ENCODE measurements at regions of chr9 and their contacts with region 1.

Region 1: GRCh38 chr9:111386386-111386785 is 56.4 kb upstream of the OR2K2 start:
- DNase-seq: no peak
- ATAC-seq: no peak
- H3K4me3 ChIP-seq: no peak overlapping the region
- H3K27ac ChIP-seq: no peak overlapping the region
- H3K4me1 ChIP-seq: no peaks in the 10 kb centered on the region
- H3K27me3 ChIP-seq: no peaks in the 10 kb centered on the region
- CTCF ChIP-seq: no peak
- POLR2A ChIP-seq: no peak
- RAD21 ChIP-seq: no peak

Region 2: GRCh38 chr9:111356481-111357244 is 29.7 kb before region 1 on chr9:
- CTCF ChIA-PET with region 1: interaction called, 3 read pairs
- POLR2A ChIA-PET with region 1: interaction called, 13 read pairs
- dilution Hi-C with region 1: no loop called
- in situ Hi-C with region 1: no loop called
- intact Hi-C with region 1: no loop called
- DNase-seq: peak; percentile 94
- ATAC-seq: peak; percentile 89
- H3K4me3 ChIP-seq: peak overlapping the region; percentile 44
- H3K27ac ChIP-seq: peak overlapping the region; percentile 88
- H3K4me1 ChIP-seq: peaks cover 4% of the 10 kb centered on the region; the same call in 1 of the 2 replicates
- H3K27me3 ChIP-seq: no peaks in the 10 kb centered on the region
- CTCF ChIP-seq: no peak; the same call in 1 of the 2 replicates
- POLR2A ChIP-seq: no peak
- RAD21 ChIP-seq: no peak

Region 3: GRCh38 chr9:111369873-111370272 is 16.5 kb before region 1 on chr9:
- CTCF ChIA-PET with region 1: no interaction called
- POLR2A ChIA-PET with region 1: no interaction called
- dilution Hi-C with region 1: no loop called
- in situ Hi-C with region 1: no loop called
- intact Hi-C with region 1: no loop called
- DNase-seq: no peak
- ATAC-seq: no peak
- H3K4me3 ChIP-seq: no peak overlapping the region
- H3K27ac ChIP-seq: no peak overlapping the region
- H3K4me1 ChIP-seq: no peaks in the 10 kb centered on the region
- H3K27me3 ChIP-seq: no peaks in the 10 kb centered on the region
- CTCF ChIP-seq: no peak
- POLR2A ChIP-seq: no peak
- RAD21 ChIP-seq: no peak

Region 4: GRCh38 chr9:111427186-111427585 is 40.8 kb after region 1 on chr9:
- CTCF ChIA-PET with region 1: no interaction called
- POLR2A ChIA-PET with region 1: no interaction called
- dilution Hi-C with region 1: no loop called
- in situ Hi-C with region 1: no loop called
- intact Hi-C with region 1: loop called (anchors 5 kb)
- DNase-seq: peak; percentile 67
- ATAC-seq: no peak
- H3K4me3 ChIP-seq: no peak overlapping the region
- H3K27ac ChIP-seq: no peak overlapping the region
- H3K4me1 ChIP-seq: no peaks in the 10 kb centered on the region; the same call in 1 of the 2 replicates
- H3K27me3 ChIP-seq: no peaks in the 10 kb centered on the region
- CTCF ChIP-seq: no peak
- POLR2A ChIP-seq: no peak
- RAD21 ChIP-seq: no peak

Region 5: DNA sequence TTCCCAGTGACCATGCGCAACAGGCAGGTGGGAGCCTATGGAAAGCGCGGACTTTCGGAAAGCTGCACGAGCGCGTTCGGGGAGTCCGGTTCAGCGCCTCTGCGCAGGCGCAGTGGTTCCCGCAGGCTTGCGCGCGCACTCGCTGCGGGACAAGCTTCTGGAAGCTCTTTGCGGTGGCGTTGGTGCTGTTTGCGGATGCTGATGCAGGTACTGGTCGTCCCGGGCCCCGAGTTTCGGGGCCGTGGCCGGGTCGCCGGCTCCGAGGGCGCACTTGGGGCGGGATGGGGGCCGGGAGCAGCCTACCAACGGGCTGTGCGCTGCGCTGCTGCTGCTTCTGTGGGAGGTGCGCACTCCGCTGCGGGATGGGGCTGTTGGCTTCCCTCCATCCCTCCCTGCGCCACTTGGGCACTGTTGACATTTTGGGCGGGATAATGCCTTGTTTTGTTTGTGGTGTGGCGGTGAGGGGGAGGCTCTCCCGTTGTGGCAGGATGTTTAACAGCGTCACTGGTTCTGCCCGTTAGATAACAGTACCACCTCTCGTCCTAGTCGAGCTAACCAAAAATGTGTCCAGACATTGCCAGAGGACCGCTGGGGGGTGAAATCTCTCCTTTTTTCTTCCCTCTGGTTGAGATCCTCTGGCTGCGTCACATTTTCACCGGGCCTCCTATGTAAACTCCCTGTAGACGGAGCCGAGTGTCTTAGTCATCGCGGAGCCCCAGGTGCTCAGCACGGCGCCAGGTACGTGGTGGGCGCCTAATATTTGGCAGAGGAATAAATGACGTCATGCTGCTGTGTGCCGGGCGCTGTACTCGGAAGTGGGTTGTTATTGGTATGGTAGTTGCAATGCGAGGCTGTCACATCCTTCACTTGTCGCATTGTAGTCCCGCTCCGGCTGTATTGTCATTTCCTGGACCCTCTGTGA is 138.9 kb after region 1 on chr9 and contains the start of gene ZNF483:
- CTCF ChIA-PET with region 1: no interaction called
- POLR2A ChIA-PET with region 1: no interaction called
- dilution Hi-C with region 1: no loop called
- in situ Hi-C with region 1: no loop called
- intact Hi-C with region 1: no loop called
- DNase-seq: peak; percentile 75
- ATAC-seq: peak; percentile 93
- H3K4me3 ChIP-seq: peak within 1 kb of the TSS; percentile 85
- H3K27ac ChIP-seq: no peak within 1 kb of the TSS
- H3K4me1 ChIP-seq: peaks cover 4% of the 10 kb centered on the region
- H3K27me3 ChIP-seq: peaks cover 3% of the 10 kb centered on the region; the same call in 1 of the 2 replicates
- CTCF ChIP-seq: no peak
- POLR2A ChIP-seq: no peak
- RAD21 ChIP-seq: no peak
- total RNA-seq, gene ZNF483: 0.90 and 1.4 TPM in 2 replicates